ENCODE measurements at regions of chr9 and their contacts with region 1.

Region 1: DNA sequence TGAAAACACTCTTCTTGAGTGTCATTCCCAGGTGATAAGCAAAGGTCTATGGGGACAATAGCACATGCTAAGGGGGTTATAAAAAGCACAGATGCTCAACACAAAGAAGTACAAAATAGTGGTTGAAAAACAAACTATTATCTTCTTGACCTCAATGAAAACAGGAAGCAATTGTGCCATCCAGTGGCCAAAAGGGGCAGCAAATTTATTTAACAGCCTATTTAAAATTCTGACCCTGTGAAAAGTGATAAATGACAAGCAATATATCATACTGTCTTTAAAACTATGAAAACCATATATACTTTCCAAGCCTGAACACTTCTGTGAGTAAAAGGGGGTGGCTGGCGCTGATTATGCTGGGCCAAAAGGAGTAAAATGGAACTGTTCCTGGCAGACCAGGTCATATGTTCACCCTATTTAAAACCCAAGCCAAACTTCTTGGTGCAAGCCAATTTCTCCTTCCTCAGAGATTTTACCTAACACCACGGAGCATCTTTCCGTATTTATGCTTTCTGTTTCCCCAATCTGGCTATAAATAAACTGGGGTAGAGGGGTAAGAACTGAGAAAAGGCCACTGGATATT is 29.7 kb downstream of the TEX10 start:
- DNase-seq: peak; percentile 52
- H3K4me3 ChIP-seq: no peak overlapping the region
- H3K27ac ChIP-seq: no peak overlapping the region
- H3K4me1 ChIP-seq: no peaks in the 10 kb centered on the region
- H3K27me3 ChIP-seq: no peaks in the 10 kb centered on the region
- CTCF ChIP-seq: peak; percentile 38 to 50
- POLR2A ChIP-seq: no peak

Region 2: DNA sequence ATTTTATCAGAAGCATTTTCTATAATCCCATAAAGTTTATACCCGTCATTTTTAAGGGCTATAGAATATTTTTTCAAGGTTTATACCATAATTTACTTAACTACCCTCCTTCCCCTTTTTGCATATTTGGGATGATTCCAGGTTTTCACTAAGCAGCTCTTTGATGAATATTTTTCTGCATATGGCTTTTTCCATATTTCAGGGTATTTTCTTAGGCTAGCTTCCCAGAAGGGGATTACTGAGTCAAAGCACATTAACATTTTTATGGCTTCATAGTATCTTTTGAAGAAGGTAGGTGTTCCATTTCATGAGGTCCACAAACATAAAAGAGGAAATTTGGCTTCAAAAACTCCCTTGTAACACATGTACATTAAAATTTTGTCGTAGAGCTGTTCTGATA is 1394.0 kb before region 1 on chr9:
- CTCF ChIA-PET with region 1: no interaction called
- POLR2A ChIA-PET with region 1: no interaction called
- dilution Hi-C with region 1: no loop called
- intact Hi-C with region 1: no loop called
- DNase-seq: no peak
- H3K4me3 ChIP-seq: no peak overlapping the region
- H3K27ac ChIP-seq: no peak overlapping the region
- H3K4me1 ChIP-seq: no peaks in the 10 kb centered on the region
- H3K27me3 ChIP-seq: no peaks in the 10 kb centered on the region
- CTCF ChIP-seq: no peak
- POLR2A ChIP-seq: no peak

Region 3: GRCh38 chr9:99266255-99267023 is 1056.6 kb before region 1 on chr9:
- CTCF ChIA-PET with region 1: no interaction called
- POLR2A ChIA-PET with region 1: no interaction called
- dilution Hi-C with region 1: no loop called
- intact Hi-C with region 1: loop called (anchors 5 kb)
- DNase-seq: peak; percentile 75
- H3K4me3 ChIP-seq: no peak overlapping the region
- H3K27ac ChIP-seq: no peak overlapping the region
- H3K4me1 ChIP-seq: peaks cover 20% of the 10 kb centered on the region
- H3K27me3 ChIP-seq: no peaks in the 10 kb centered on the region
- CTCF ChIP-seq: peak; percentile 89 to 91
- POLR2A ChIP-seq: no peak

Region 4: GRCh38 chr9:100028201-100028784 is 294.8 kb before region 1 on chr9:
- CTCF ChIA-PET with region 1: interaction called, 7 read pairs
- POLR2A ChIA-PET with region 1: no interaction called
- dilution Hi-C with region 1: no loop called
- intact Hi-C with region 1: loop called (anchors 1 kb)
- DNase-seq: peak; percentile 87
- H3K4me3 ChIP-seq: no peak overlapping the region
- H3K27ac ChIP-seq: no peak overlapping the region
- H3K4me1 ChIP-seq: no peaks in the 10 kb centered on the region
- H3K27me3 ChIP-seq: no peaks in the 10 kb centered on the region
- CTCF ChIP-seq: peak; percentile 89 to 95
- POLR2A ChIP-seq: no peak

Region 5: DNA sequence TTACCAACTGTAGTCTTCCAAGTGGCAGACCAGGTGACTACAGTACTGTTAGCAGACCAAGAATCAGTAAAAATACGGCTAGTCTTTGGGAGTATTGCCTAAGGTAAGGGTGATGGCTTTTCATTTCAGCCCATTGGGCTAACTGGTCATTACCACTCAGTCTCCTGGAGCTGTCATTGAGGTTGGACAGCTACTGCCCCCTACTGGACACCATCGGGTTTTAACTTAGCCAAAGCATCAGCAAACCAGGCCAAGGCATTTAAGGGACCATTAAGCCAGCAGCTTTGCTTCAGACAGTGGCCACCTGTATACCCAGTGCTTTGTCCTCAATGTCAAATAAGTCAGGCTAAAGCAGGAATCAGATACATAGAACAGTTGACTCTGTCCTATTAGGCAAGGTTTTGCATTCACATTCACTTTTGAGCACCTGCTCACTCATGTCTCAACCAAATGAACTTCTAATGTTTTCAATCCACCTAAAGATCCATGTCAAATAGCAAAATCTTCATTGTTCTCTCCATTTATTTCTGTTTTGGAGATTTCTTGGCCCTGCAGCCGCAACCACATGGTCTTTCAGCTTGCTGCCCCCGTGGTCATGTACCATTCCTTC is 106.8 kb before region 1 on chr9:
- CTCF ChIA-PET with region 1: interaction called, 5 read pairs
- POLR2A ChIA-PET with region 1: no interaction called
- dilution Hi-C with region 1: no loop called
- intact Hi-C with region 1: loop called (anchors 5 kb)
- DNase-seq: peak; percentile 61
- H3K4me3 ChIP-seq: no peak overlapping the region
- H3K27ac ChIP-seq: no peak overlapping the region
- H3K4me1 ChIP-seq: no peaks in the 10 kb centered on the region
- H3K27me3 ChIP-seq: no peaks in the 10 kb centered on the region
- CTCF ChIP-seq: peak; percentile 72 to 76
- POLR2A ChIP-seq: no peak

Region 6: DNA sequence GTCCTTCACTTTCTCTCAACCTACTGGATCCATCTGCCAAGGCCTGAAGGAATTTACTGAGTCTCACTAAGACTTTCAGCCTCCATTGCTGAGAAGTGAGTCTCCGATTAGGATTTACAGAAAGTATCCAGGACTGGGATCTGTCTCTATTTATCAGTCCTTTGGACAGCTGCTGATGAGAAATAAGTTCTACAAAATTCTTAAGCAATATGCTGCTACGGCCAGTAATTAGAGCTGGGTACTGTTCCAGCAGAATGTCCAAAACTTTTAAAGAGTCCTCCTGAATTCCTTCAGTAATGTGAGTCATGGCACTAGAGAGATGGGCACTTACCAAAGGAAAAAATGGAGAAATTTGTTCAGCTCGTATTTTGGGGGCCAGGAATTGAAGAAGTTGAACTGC is 23.8 kb after region 1 on chr9:
- CTCF ChIA-PET with region 1: interaction called, 30 read pairs
- POLR2A ChIA-PET with region 1: no interaction called
- dilution Hi-C with region 1: no loop called
- intact Hi-C with region 1: no loop called
- DNase-seq: no peak
- H3K4me3 ChIP-seq: no peak overlapping the region
- H3K27ac ChIP-seq: no peak overlapping the region
- H3K4me1 ChIP-seq: peaks cover 4% of the 10 kb centered on the region
- H3K27me3 ChIP-seq: no peaks in the 10 kb centered on the region
- CTCF ChIP-seq: no peak
- POLR2A ChIP-seq: no peak

Region 7: GRCh38 chr9:100426530-100427428 is 103.7 kb after region 1 on chr9 and contains the start of gene MSANTD3:
- CTCF ChIA-PET with region 1: interaction called, 19 read pairs
- POLR2A ChIA-PET with region 1: no interaction called
- dilution Hi-C with region 1: loop called (anchors 25 kb)
- intact Hi-C with region 1: no loop called
- DNase-seq: peak; percentile 84
- H3K4me3 ChIP-seq: peak within 1 kb of the TSS; percentile 91 to 96 (median 94)
- H3K27ac ChIP-seq: peak within 1 kb of the TSS; percentile 98
- H3K4me1 ChIP-seq: peaks cover 36% of the 10 kb centered on the region
- H3K27me3 ChIP-seq: no peaks in the 10 kb centered on the region
- CTCF ChIP-seq: no peak
- POLR2A ChIP-seq: peak; percentile 59
- total RNA-seq, gene MSANTD3: 82.7 and 88.5 TPM in 2 replicates